Posterior vena cava (tissue), 2 donors: ENCODE measurements at regions of chr19 and their contacts with region 1.

Region 1: DNA sequence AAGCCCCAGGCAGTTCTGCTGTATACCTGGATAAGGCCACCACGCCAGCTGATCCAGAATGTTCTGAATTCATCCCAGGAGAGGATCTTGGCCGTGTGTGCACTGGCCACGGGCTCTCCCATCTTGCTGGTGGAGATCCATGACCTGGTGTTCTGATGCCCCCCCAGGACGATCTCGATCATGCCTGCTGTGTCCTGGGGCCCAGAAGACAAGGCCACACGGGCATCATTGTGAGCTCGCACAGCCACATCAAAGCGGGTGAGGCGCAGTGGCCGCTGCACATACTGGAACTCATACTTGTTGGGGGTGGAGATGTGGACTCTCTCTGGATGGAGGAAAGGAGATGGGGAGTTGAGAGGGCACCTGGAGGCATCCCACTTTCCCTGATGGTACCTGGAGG is 40.1 kb downstream of the F2RL3 start:
- DNase-seq: peak; percentile 49

Region 2: GRCh38 chr19:16876904-16877361 is 52.0 kb before region 1 on chr19:
- intact Hi-C with region 1: no loop called
- DNase-seq: no peak

Region 3: GRCh38 chr19:16944626-16945363 is 15.9 kb after region 1 on chr19:
- intact Hi-C with region 1: no loop called
- DNase-seq: peak; percentile 64

Region 4: GRCh38 chr19:17610384-17610783 is 681.5 kb after region 1 on chr19:
- intact Hi-C with region 1: loop called in 1 of 2 experiments (anchors 5 kb)
- DNase-seq: no peak